Motor neuron (in vitro differentiated cells): ENCODE measurements at regions of chr12 and their contacts with region 1.

Region 1: GRCh38 chr12:39272871-39273770 is 169.8 kb downstream of the KIF21A start:
- ATAC-seq: peak; percentile 25 to 87 (median 58)
- H3K4me3 ChIP-seq: no peak overlapping the region
- H3K27ac ChIP-seq: no peak overlapping the region
- H3K4me1 ChIP-seq: peaks cover 5 to 7% of the 10 kb centered on the region in 2 donors

Region 2: GRCh38 chr12:39145175-39145999 is 127.7 kb before region 1 on chr12:
- in situ Hi-C with region 1: loop called in 1 of 9 experiments (anchors 25 kb)
- ATAC-seq: peak in 4 of 8 experiments; percentile 38 to 99 (median 51)
- H3K4me3 ChIP-seq: peak overlapping the region in 1 of 5 donors; percentile 24
- H3K27ac ChIP-seq: no peak overlapping the region
- H3K4me1 ChIP-seq: no peaks in the 10 kb centered on the region